HEK293 (cell line): ENCODE measurements at regions of chr3 and their contacts with region 1.

Region 1: GRCh38 chr3:61882253-61882652 is 320.9 kb downstream of the PTPRG start:
- H3K4me3 ChIP-seq: no peak overlapping the region
- H3K27ac ChIP-seq: no peak overlapping the region
- H3K4me1 ChIP-seq: peaks cover 16% of the 10 kb centered on the region
- CTCF ChIP-seq: no peak

Region 2: DNA sequence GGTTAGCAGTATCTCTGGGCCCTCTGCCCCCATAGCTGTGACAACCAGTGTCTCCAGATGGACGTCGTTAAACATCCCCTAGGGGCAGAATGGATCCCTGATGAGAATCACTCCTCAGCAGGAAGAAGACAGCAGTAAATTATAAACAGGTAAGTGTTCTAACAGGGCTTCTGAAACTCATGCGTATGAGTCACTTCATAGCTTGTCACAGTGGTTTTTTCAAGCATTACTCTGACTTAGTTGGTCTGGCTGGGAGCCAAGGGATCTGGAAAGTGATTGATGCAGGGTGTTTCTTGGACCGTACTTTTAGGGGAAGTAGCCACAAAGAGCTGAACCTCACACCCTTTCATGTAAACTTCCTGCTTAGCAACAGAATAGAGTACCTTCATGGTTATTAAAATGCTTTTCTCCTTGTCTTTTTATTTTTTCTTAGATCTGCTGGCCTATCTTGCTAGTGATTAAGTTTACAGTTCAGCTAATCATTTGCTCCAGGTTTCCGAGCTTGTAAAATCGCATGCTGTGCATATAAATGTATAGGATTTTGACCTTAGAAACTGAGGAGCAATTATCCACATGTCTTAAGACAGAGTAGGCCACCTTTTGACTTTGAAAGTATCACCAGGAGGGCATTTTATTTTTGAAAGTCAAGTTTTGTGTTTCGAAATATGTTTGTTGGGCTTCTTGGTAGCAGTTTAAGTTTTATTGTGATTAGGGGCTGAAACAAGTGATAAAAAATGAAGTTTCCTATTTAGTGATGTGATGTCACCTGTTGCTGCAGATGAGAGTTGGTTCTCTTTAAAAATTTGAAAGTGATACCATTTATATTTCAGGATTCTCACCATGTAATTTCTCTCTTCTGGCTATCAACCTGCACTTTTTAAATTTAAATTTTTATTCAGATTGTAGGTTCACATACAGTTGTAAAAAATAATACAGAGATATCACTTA is 13.0 kb after region 1 on chr3:
- CTCF ChIA-PET with region 1: no interaction called
- POLR2A ChIA-PET with region 1: no interaction called
- H3K4me3 ChIP-seq: no peak overlapping the region
- H3K27ac ChIP-seq: peak overlapping the region; percentile 65
- H3K4me1 ChIP-seq: peaks cover 17% of the 10 kb centered on the region
- CTCF ChIP-seq: no peak

Region 3: GRCh38 chr3:62036726-62037125 is 154.5 kb after region 1 on chr3:
- CTCF ChIA-PET with region 1: interaction called, 10 read pairs
- POLR2A ChIA-PET with region 1: no interaction called
- H3K4me3 ChIP-seq: no peak overlapping the region
- H3K27ac ChIP-seq: no peak overlapping the region
- H3K4me1 ChIP-seq: no peaks in the 10 kb centered on the region
- CTCF ChIP-seq: no peak